Right cardiac atrium (tissue), 5 donors: ENCODE measurements at regions of chr11 and their contacts with region 1.

Region 1: DNA sequence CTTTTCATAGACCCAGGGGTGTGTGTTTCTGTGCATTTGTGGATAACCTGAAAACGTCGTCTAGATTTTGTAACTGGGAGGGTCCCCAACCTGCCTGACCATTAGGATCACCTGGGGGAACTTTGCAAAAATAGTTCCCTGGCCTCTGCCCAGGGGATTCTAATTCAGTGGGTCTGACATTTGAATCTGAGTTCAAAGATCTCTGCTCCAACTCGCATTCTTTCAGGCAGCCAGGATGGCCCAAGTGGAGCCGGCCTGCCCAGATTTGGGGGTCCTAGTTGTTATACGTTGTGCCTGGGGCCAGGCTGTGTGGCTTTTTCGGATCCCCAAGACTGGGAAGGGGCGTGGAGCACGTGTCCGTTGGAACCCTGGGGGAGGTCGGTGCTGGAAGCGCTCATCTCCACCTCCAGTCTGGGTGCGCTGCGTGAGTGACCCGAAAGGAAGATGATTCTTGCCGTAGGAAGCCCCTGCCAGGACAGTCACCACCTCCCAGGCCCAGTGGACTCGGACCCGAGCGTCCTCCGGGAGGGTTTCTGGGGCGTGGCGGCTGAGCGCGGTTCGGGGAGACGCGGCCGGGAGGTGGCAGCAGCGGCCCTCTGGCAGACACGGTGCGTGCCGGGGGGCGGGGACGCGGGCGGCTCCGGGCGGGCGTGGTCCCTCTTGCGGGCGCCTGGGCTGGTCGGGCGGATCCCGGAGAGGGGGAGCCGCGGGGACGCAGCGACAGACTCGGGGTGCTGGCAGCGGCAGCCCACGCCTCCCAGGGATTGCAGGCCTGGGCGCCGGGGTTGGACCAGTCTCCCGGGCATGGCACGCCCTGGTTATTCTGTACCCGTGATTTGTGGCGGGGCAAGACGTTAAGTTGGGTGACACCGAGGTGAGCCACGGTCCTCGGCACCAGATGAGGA is 29.2 kb upstream of the PLET1 start:
- DNase-seq: peak; percentile 88 to 96 (median 94)
- ATAC-seq: peak; percentile 95
- H3K4me3 ChIP-seq: peak overlapping the region; percentile 42
- H3K27ac ChIP-seq: peak overlapping the region; percentile 26
- H3K4me1 ChIP-seq: no peaks in the 10 kb centered on the region
- H3K27me3 ChIP-seq: no peaks in the 10 kb centered on the region

Region 2: DNA sequence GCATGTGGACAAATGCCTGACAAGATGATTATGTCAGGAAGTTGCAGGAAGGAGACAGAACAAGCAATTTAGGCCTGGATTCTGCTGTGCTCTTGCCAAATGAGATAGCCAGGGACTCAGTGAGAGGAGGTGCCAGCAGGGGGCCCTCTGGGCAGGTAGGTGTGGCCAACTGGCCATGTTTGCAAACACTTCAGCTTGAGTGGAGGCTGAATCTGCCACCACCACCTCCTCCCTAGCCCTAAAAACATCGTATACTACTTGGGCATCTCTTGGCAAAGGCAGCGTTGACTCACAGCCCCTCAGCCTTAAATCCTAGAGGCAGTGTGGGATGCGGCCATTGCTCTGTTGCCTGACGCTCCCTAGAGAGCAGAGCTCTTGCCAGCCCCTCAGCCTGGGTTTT is 65.9 kb after region 1 on chr11:
- intact Hi-C with region 1: loop called in 1 of 4 experiments (anchors 5 kb)
- DNase-seq: peak; percentile 32 to 72 (median 64)
- ATAC-seq: peak; percentile 72 to 73
- H3K4me3 ChIP-seq: no peak overlapping the region
- H3K27ac ChIP-seq: no peak overlapping the region
- H3K4me1 ChIP-seq: peaks cover 2% of the 10 kb centered on the region
- H3K27me3 ChIP-seq: no peaks in the 10 kb centered on the region

Region 3: DNA sequence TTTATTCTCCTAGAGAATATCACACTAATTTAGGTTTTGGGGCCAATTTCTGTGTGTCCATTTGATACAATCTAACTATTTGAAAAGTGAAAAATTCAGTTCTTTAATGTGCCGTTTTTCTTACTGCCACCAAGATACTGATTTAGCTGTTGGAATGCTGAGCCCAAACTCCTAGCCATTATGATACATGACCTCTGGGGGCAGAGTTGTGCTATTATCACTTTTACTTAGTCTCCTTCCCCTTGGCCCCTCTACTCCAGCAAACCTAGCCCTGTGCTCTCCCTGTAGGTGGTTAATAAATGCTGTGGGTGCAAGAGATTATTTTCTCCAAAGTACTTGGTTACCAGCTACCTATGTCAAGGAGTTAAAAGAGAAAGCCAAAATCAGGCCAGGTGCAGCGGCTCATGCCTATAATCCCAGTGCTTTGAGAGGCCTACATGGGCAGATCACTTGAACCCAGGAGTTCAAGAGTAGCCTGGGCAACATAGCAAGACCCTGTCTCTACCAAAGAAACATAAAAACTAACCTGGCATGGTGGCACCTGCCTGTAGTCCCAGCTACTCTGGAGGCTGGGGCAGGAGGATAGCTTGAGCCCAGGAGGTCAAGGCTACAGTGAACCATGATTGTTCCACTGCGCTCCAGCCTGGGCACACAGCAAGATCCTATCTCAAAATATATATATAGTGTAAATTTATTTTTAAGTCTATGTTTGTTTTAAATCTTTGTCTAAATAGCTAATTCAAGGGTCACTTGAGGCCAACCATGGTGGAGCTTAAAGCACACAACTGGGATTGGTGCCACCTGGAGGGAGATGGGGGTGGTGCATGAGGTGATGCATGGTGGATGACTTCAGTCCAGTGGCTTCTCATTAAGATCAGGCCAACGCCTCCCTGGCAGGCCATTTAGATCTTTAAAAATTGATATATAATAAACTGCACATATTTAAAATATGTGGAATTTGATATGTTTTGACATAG is 164.0 kb after region 1 on chr11:
- intact Hi-C with region 1: loop called in 3 of 4 experiments (anchors 5 to 10 kb)
- DNase-seq: peak in 2 of 3 donors; percentile 27 to 57
- ATAC-seq: no peak
- H3K4me3 ChIP-seq: no peak overlapping the region
- H3K27ac ChIP-seq: no peak overlapping the region
- H3K4me1 ChIP-seq: no peaks in the 10 kb centered on the region
- H3K27me3 ChIP-seq: no peaks in the 10 kb centered on the region

Region 4: DNA sequence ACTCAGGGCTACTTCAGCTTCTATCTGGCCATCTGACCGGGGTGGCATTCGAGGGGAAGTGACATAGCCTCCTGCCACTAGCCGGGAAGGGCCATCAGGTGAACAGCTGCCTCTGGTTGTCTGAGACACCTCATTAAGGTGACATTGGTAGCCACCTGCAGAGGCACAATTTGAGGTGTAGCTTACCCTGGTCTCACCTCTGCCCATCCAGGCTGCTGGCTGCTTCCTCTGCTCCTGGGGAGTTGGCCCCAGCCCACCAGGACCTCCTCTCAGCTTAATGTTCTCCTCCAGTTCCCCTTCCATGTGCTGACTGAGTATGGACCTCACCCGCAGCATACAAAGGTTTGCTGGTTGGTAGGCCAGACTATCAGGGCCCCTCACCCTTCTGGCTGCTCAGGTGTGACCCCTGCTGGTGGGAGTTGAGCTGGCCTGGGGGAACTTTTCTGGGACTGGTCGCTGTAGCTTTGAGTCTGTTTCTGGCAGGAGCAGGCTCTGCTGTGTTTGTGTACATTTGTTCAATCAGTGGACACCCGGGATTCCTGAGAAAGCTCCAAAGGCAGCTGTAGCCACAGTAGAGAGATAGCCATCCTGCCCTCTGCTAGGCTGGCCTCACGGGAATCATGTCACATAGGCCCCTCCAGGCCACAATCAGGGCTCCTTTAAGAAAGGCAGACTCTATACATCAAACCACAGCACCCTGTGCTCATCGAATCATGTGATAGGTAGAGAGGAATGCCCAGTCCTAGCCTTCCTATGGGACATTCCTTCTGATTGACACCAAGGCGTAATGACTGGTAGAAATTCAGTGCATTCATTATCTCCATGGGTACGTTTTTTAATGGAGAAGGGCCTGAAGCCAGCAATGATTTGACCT is 265.9 kb after region 1 on chr11:
- intact Hi-C with region 1: loop called (anchors 2 to 10 kb)
- DNase-seq: peak; percentile 49 to 80 (median 79)
- ATAC-seq: peak; percentile 72 to 77
- H3K4me3 ChIP-seq: no peak overlapping the region
- H3K27ac ChIP-seq: no peak overlapping the region
- H3K4me1 ChIP-seq: no peaks in the 10 kb centered on the region
- H3K27me3 ChIP-seq: no peaks in the 10 kb centered on the region

Region 5: DNA sequence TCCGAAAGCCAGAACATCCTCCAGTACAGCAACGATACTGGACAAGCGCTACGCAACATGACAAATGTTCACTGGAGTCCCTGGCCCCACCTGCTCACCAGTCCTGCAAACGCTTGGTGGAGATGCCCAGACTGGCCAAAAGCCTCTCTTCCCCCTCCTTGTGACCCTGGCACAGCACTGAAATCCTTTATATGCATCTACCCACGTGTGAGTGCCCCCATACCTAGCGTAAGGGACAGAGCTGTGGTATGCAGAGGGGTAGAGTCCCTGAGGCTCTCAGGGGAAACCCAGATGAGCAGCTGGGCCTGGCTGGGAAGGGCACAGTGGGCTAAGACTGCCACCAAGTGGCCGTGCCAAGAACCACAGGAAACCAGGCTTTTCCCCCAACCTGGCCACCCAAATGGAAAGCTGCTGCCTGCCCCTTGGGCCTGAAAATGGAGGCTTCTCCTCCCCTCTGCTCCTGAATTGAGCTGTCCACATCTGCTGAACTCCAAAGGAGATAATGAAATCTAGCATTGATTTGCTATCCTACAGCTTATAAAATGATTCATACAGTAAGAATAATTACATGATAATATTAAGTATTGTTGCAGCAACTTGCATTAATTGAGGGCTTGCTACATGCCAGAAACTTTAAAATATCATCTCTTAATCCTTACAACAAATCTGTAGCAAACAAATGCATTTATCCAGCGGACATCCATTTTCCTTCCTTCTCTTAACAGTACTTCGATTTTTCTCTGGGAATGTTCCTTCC is 999.8 kb after region 1 on chr11:
- intact Hi-C with region 1: loop called (anchors 5 to 10 kb)
- DNase-seq: peak; percentile 48 to 83 (median 75)
- ATAC-seq: peak; percentile 76 to 82
- H3K4me3 ChIP-seq: no peak overlapping the region
- H3K27ac ChIP-seq: no peak overlapping the region
- H3K4me1 ChIP-seq: no peaks in the 10 kb centered on the region
- H3K27me3 ChIP-seq: no peaks in the 10 kb centered on the region